H1 (cell line): ENCODE measurements at regions of chr11 and their contacts with region 1.

Region 1: DNA sequence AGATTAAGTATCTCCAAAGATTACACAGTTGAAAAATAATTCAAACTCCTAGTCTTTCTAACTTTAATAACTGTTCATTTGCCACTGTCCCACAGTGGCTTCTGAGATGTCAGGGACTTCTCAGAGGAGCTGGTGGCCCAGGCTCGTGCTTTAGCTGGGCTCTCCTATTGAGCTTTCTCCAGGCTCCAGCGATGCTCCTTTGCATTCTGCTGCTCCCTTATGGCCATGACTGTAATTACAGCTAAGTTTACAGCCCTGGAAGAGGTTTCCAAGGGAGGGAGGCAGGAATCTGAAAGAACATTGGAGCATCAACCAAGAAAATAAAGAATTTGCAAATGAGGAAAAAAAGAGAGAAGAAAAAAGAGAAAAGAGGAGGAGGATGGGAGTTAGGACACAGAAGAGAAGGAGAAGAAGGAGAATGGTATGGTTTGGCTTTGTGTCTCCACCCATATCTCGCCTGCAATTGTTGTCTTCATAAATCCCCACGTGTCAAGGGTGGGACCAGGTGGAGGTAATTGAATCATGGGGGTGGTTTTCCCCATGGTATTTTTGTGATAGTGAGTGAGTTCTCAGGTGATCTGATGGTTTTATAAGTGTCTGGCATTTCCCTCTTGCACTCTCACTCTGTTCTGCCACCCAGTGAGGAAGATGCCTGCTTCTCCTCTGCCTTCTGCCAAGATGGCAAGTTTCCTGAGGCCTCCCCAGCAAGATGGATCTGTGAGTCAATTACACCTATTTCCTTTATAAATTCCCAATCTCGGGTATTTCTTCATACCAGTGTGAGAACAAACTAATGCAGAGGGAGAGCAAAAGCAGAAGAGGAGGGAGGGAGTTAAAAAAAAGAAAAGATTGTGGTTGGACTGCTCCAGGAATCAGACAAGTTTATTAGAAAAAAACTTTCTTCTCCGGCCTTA is 857.0 kb downstream of the KCNA4 start:
- DNase-seq: peak; percentile 19 to 56
- H3K4me3 ChIP-seq: no peak overlapping the region
- H3K27ac ChIP-seq: no peak overlapping the region
- H3K4me1 ChIP-seq: no peaks in the 10 kb centered on the region; a peak in 1 of 7 replicates
- H3K27me3 ChIP-seq: no peaks in the 10 kb centered on the region
- CTCF ChIP-seq: peak; percentile 6 to 76 (median 73)
- EP300 ChIP-seq: no peak
- POLR2A ChIP-seq: 0 out of 3 replicates have a peak, but pooled peaks of 1 of the 2 experiments have one; percentile 20
- RAD21 ChIP-seq: peak; percentile 90 to 94

Region 2: GRCh38 chr11:29173660-29174062 is 13.9 kb after region 1 on chr11:
- CTCF ChIA-PET with region 1: interaction called, 10 read pairs
- POLR2A ChIA-PET with region 1: no interaction called
- DNase-seq: no peak
- H3K4me3 ChIP-seq: no peak overlapping the region
- H3K27ac ChIP-seq: no peak overlapping the region
- H3K4me1 ChIP-seq: no peaks in the 10 kb centered on the region
- H3K27me3 ChIP-seq: no peaks in the 10 kb centered on the region
- CTCF ChIP-seq: no peak
- EP300 ChIP-seq: no peak
- POLR2A ChIP-seq: no peak
- RAD21 ChIP-seq: no peak

Region 3: DNA sequence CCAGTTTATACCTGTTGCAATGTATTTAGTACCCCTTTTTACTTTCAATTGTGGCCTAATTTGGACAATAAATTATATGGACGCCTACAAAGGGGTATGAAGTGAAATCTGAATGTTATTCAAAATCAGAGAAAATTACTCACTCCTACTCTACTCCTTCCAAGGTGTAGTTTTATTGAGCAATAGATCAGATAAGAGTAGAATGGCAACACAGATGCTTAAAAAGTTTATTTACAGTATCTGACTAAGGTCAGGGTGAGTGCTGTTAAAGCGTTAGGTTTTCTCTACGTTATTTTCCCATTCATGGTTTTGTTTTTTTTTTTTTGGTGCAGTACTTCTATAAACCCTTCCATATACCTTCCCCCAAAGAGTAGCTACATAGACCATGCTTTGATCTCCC is 51.4 kb after region 1 on chr11:
- CTCF ChIA-PET with region 1: no interaction called
- POLR2A ChIA-PET with region 1: no interaction called
- DNase-seq: no peak
- H3K4me3 ChIP-seq: no peak overlapping the region
- H3K27ac ChIP-seq: no peak overlapping the region
- H3K4me1 ChIP-seq: no peaks in the 10 kb centered on the region
- H3K27me3 ChIP-seq: no peaks in the 10 kb centered on the region
- CTCF ChIP-seq: no peak
- EP300 ChIP-seq: no peak
- POLR2A ChIP-seq: no peak
- RAD21 ChIP-seq: no peak